Panc1 (cell line): ENCODE measurements at regions of chr4 and their contacts with region 1.

Region 1: DNA sequence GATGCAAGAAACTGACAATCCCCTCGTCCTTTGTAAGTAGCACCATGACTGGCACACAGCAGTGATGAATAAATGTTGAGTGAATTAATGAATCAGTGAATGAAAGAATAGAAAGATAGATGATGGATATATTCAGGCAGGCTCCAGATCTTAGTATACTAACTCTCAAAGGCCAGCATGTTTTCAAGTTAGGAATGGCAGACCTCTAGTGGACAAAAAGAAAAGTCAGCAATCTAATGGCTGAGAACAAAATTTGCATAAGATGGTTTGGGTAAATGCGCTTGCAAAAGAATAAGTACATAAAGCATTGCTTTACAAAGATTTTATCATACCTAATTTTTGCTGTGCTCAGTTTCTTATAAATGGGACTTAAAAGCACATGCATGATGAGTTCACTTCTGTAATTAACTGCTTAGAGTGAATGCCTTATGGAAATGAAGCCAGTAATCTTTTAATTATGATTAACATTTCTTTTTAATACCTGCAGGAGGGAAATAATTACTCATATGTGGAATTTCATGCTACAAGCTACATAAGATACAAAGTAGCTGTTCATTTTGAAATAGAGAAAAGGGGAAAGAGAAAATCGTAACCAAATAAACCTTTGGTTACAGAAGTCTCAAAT is 126.9 kb upstream of the GPRIN3 start:
- DNase-seq: no peak
- ATAC-seq: no peak
- H3K4me3 ChIP-seq: no peak overlapping the region
- H3K27ac ChIP-seq: no peak overlapping the region
- H3K4me1 ChIP-seq: no peaks in the 10 kb centered on the region
- H3K27me3 ChIP-seq: no peaks in the 10 kb centered on the region
- CTCF ChIP-seq: peak; percentile 66; the same call in 1 of the 2 replicates

Region 2: DNA sequence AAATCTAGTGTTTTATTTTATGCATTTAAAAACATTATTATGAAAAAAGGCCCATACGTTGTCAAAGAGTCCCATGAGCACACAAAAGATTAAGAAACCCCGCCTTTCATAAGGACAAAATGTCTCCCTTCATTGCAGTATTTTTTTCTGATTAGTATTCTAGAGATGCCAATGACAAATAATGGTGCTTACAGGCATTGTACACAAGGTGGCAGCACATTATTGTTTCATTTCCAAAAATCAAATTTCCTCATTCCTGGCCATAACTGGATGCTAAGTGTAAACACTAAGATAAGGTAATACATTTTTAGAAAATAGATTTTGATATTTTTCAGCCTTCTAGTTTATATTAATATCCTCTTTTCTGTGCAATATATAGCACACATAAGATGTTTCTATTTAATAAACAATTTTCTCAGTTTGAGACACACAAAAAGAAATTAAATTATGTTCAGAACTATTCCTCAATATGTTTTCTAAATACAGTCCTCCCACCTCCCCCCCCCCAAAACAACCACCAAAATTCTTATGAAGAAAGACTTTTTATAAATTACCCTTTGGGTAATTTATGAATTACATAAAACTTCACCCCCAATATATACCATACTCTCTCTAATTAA is 275.5 kb before region 1 on chr4:
- CTCF ChIA-PET with region 1: no interaction called
- POLR2A ChIA-PET with region 1: no interaction called
- in situ Hi-C with region 1: no loop called
- intact Hi-C with region 1: loop called (anchors 2 kb)
- DNase-seq: no peak
- ATAC-seq: no peak
- H3K4me3 ChIP-seq: no peak overlapping the region
- H3K27ac ChIP-seq: no peak overlapping the region
- H3K4me1 ChIP-seq: no peaks in the 10 kb centered on the region
- H3K27me3 ChIP-seq: no peaks in the 10 kb centered on the region
- CTCF ChIP-seq: peak; percentile 68; the same call in 1 of the 2 replicates

Region 3: DNA sequence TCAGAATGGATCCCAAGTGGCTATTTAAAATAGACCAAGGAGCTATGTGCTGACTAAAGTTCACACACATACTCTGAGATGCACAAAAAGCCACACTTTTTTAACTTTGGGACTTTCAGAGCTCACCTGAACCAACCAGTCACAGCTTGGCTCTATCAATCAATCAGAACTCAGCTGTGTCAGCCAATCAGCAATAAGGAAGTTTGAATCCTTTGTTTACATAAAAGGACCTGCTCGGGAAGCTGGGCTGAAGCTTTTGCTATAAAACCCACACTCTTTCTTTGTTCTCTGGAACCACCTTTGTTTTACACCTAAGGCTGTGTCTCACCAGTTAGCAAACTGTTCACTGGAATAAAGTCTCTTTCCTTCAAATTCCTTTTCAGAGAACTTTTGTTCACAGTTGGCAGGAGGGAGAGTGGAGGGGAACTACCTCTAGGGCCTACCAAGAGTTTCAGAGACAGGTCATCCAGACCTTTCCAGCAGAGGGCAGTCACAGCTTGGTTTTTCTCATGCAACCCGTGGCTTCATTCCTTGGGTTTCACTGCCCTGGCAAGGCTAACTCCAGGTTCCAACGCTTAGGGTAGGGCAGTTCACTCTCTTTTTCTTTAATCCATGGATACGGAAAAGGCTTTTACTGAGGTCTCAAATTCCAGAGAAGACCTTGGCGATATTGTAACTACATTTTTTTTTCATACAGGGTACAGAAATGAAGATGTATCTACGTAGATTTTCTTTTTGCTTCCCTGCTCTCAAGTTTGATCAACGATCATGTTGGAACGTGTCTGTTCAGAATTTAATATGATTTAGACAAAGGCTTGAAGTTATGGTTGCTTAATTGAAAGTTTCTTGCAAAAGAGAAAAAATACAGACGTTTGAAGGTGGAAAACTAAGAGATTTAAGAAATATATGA is 207.6 kb before region 1 on chr4:
- CTCF ChIA-PET with region 1: interaction called, 3 read pairs
- POLR2A ChIA-PET with region 1: no interaction called
- in situ Hi-C with region 1: no loop called
- intact Hi-C with region 1: loop called (anchors 1 kb)
- DNase-seq: peak; percentile 48
- ATAC-seq: peak; percentile 93
- H3K4me3 ChIP-seq: no peak overlapping the region
- H3K27ac ChIP-seq: no peak overlapping the region
- H3K4me1 ChIP-seq: no peaks in the 10 kb centered on the region
- H3K27me3 ChIP-seq: no peaks in the 10 kb centered on the region
- CTCF ChIP-seq: peak; percentile 75